Mammary epithelial cell (primary cell): ENCODE measurements at regions of chr5 and their contacts with region 1.

Region 1: GRCh38 chr5:15995341-15996052 is 184.1 kb downstream of the MARCHF11 start:
- DNase-seq: peak; percentile 23
- H3K4me3 ChIP-seq: no peak overlapping the region
- H3K27ac ChIP-seq: no peak overlapping the region
- H3K4me1 ChIP-seq: peaks cover 13% of the 10 kb centered on the region
- H3K27me3 ChIP-seq: no peaks in the 10 kb centered on the region
- CTCF ChIP-seq: peak; percentile 44 to 64

Region 2: GRCh38 chr5:14685757-14686156 is 1309.7 kb before region 1 on chr5:
- CTCF ChIA-PET with region 1: no interaction called
- dilution Hi-C with region 1: no loop called
- in situ Hi-C with region 1: no loop called
- intact Hi-C with region 1: loop called (anchors 10 kb)
- DNase-seq: peak; percentile 53
- H3K4me3 ChIP-seq: no peak overlapping the region
- H3K27ac ChIP-seq: peak overlapping the region; percentile 30
- H3K4me1 ChIP-seq: peaks cover 20% of the 10 kb centered on the region
- H3K27me3 ChIP-seq: no peaks in the 10 kb centered on the region
- CTCF ChIP-seq: peak; percentile 52 to 74

Region 3: DNA sequence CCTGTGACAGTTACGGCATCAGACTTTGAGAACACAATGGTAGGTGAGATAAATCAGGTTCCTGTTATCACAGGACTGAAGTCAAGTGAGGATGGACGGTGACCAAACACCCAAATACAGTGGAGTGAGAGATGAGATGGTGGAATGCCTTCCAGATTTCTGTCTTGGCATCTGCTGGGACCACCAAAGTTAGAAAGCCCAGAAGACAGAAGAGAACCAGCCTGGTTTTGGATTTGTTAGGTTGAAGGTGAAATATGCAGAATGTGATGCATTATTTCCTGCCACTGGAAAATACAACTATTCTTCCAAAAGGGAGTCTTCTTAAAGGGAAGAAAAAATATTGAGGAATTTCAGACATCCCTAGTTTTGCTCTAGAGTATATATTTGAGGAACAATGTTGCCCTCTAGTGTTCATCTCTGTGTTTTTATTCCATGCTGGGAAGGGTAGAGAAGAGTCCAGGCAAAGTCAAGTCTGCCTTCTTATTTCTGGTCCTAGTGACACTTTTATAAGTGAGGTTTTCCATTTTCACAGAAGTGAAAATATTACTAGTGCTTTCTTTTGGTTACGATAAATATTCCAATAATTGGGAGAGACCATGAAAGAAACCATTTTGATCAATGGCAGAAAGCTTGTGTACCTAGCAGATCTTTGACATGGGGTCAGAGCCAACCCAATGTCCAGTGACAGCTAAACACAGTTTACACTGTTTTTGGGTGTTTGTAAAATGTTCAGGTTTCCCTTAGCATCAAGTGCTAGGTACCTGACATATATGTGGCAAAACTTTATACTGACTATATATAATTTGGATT is 981.6 kb before region 1 on chr5:
- CTCF ChIA-PET with region 1: no interaction called
- dilution Hi-C with region 1: no loop called
- in situ Hi-C with region 1: no loop called
- intact Hi-C with region 1: loop called (anchors 5 kb)
- DNase-seq: peak; percentile 54
- H3K4me3 ChIP-seq: no peak overlapping the region
- H3K27ac ChIP-seq: no peak overlapping the region
- H3K4me1 ChIP-seq: peaks cover 9% of the 10 kb centered on the region
- H3K27me3 ChIP-seq: no peaks in the 10 kb centered on the region
- CTCF ChIP-seq: peak; percentile 54 to 62

Region 4: DNA sequence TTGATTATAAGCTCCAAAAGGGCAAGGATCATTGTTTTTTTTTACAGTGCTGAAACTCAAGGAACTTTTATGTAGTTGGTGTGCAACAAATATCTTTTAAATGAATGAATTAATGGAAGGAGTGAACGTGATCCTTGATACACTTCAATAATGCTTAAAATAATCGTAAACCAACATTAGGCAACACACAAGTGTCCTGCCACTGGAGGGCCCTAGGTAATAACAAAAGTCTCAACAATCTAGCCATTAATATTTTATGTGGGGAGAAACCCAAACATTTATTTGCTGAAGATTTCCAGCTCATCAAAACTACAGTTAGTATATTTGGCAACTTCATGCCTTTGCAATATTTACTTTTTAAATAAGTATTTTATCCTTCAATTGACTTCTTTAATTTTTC is 804.5 kb before region 1 on chr5:
- CTCF ChIA-PET with region 1: no interaction called
- dilution Hi-C with region 1: no loop called
- in situ Hi-C with region 1: no loop called
- intact Hi-C with region 1: loop called (anchors 1 kb)
- DNase-seq: no peak
- H3K4me3 ChIP-seq: no peak overlapping the region
- H3K27ac ChIP-seq: no peak overlapping the region
- H3K4me1 ChIP-seq: no peaks in the 10 kb centered on the region
- H3K27me3 ChIP-seq: no peaks in the 10 kb centered on the region
- CTCF ChIP-seq: peak in 1 of 2 donors; percentile 10

Region 5: GRCh38 chr5:15463231-15463980 is 532.1 kb before region 1 on chr5:
- CTCF ChIA-PET with region 1: no interaction called
- dilution Hi-C with region 1: no loop called
- in situ Hi-C with region 1: no loop called
- intact Hi-C with region 1: loop called (anchors 1 kb)
- DNase-seq: no peak
- H3K4me3 ChIP-seq: no peak overlapping the region
- H3K27ac ChIP-seq: no peak overlapping the region
- H3K4me1 ChIP-seq: no peaks in the 10 kb centered on the region
- H3K27me3 ChIP-seq: no peaks in the 10 kb centered on the region
- CTCF ChIP-seq: no peak

Region 6: DNA sequence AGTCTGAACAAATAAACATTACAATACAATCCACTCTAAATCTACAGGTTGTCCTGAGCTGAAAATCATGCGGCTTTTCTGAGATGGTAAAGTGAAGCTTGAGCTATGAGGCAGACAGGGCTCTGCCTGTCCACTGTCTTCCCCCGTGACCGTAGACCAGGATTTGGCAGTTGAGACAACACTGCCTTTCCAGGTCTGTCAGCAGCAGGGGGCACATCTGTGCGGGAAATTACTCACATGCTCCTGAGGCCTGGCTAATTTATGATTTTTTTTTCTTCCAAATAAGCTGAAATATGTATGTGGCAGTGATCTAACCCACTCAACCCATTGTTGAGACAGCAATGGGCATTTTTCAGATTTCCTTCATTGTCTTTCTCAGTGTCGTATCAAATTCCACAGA is 187.6 kb before region 1 on chr5:
- CTCF ChIA-PET with region 1: no interaction called
- dilution Hi-C with region 1: no loop called
- in situ Hi-C with region 1: no loop called
- intact Hi-C with region 1: loop called (anchors 5 kb)
- DNase-seq: no peak
- H3K4me3 ChIP-seq: no peak overlapping the region
- H3K27ac ChIP-seq: no peak overlapping the region
- H3K4me1 ChIP-seq: no peaks in the 10 kb centered on the region
- H3K27me3 ChIP-seq: no peaks in the 10 kb centered on the region
- CTCF ChIP-seq: no peak

Region 7: DNA sequence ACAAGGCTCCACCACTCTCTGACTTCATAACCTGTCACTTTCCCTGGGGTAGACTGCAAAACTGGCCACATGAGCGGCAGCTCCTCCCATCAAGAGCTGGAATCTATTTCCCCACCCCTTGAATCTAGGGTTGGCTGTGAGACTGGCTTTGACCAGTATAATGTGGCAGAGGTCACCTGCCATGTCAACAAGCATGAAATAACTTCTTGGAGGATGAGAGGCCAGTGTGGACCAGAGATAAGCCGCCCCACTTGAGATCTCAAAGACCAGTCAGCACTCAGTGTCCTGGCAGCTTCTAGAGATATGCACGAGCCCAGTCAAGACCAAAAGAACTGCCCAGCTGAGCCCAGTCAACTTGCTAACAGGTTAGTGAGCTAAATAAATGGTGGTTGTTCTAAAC is 125.1 kb after region 1 on chr5:
- CTCF ChIA-PET with region 1: no interaction called
- dilution Hi-C with region 1: no loop called
- in situ Hi-C with region 1: no loop called
- intact Hi-C with region 1: loop called (anchors 2 kb)
- DNase-seq: no peak
- H3K4me3 ChIP-seq: no peak overlapping the region
- H3K27ac ChIP-seq: no peak overlapping the region
- H3K4me1 ChIP-seq: no peaks in the 10 kb centered on the region
- H3K27me3 ChIP-seq: no peaks in the 10 kb centered on the region
- CTCF ChIP-seq: no peak